ENCODE measurements at regions of chr10 and their contacts with region 1.

Region 1: DNA sequence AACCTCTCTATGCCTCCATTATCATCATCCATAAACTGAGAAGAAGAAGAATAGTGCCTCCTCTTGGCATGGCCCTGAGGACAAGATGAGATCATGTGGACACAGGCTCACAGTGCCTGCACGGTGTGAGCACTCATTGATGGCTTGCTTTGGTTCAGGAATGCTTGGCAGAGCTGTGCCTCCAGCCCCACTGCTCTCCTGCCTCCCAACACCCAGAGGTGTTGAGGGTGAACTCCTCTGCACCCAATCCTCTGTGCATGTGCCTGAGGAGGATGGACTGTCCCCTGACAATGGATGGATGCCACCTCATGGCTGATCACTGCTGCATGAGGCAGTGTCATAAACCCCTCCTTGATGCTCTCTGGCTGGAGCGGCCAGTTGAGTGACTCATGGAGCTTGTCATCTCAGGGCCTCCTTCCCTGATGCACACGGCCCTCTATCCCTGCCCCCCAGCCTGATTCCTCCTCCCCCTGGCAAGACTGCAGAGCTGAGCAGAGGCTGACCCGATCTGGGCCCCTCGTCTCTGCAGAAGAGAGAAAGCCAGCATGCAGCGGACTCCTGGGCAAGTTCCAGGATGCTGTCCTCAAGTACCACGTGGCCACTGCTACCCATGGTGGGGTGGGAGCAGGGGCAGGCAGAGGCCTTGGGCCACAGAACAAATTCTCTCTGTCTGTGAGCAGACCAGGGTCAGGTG is 136.3 kb downstream of the KCNMA1 start:
- DNase-seq: peak; percentile 41
- ATAC-seq: peak; percentile 56
- H3K4me3 ChIP-seq: no peak overlapping the region
- H3K27ac ChIP-seq: no peak overlapping the region
- H3K4me1 ChIP-seq: peaks cover 20 to 56% of the 10 kb centered on the region in 2 experiments
- H3K27me3 ChIP-seq: no peaks in the 10 kb centered on the region
- CTCF ChIP-seq: no peak
- POLR2A ChIP-seq: no peak
- RAD21 ChIP-seq: no peak

Region 2: DNA sequence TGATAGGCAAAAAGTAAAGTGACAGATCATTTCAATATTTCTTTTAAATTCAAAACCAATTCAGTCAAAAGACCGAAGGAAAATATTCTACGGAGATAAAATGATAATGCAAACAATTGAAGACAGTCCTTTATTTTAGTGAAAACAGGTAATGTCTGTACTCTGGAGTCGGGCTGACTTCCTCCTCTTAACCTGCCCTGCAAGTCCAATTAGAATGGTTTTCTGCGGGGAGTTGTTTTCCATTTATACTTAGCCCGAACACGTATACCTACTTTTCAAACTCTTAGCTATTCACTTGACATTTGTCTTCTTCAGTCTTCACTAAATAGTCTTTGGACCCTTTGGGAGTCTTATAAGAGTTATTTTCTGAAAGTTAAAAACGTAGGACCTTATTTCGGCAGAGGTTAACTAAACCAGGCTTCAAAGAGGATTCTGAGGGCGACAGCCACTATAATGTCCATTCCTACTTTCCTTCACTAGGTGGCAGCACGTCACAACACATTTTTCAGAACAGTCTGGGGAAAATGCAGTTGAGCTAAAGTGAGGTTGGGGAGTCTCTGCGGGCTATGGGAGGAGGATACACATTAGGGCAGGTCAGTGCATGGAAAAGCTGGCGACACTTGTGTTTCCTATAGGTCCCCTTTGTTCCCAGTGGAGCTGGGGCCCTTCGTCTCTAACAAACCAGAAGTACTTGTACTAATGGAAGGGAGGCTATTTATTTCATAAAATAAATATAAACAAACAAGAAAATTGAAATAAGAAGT is 335.7 kb before region 1 on chr10:
- CTCF ChIA-PET with region 1: no interaction called
- POLR2A ChIA-PET with region 1: no interaction called
- RAD21 ChIA-PET with region 1: no interaction called
- intact Hi-C with region 1: loop called (anchors 10 kb)
- DNase-seq: peak; percentile 51
- ATAC-seq: peak; percentile 90
- H3K4me3 ChIP-seq: no peak overlapping the region
- H3K27ac ChIP-seq: no peak overlapping the region
- H3K4me1 ChIP-seq: peaks cover 0 to 31% of the 10 kb centered on the region in 2 experiments; a peak in 2 of 4 replicates
- H3K27me3 ChIP-seq: peaks cover 34% of the 10 kb centered on the region
- CTCF ChIP-seq: peak; percentile 72 to 78 (median 73)
- POLR2A ChIP-seq: no peak
- RAD21 ChIP-seq: peak; percentile 86

Region 3: DNA sequence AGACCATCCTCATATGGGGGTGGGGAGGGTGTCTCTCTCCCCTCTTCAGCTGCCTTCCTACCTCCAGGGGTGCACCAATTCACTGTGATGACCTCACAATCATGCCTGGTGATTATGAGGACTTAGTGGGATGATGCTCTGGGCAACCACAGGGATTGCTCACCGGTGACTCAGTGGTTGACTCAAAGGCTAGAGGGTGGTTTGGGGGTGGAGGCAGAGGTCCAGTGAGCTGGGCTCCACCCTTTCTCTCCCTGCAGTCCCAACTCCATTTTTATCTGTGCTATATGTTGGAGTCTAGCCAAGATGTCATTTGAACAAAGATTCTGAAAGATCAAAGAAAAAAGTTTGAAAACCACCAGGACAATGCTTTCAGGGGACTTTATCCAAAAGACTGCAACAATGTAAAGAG is 150.6 kb before region 1 on chr10:
- CTCF ChIA-PET with region 1: no interaction called
- POLR2A ChIA-PET with region 1: interaction called, 3 read pairs
- RAD21 ChIA-PET with region 1: no interaction called
- intact Hi-C with region 1: loop called (anchors 5 kb)
- DNase-seq: peak; percentile 92
- ATAC-seq: peak; percentile 100
- H3K4me3 ChIP-seq: no peak overlapping the region
- H3K27ac ChIP-seq: no peak overlapping the region
- H3K4me1 ChIP-seq: peaks cover 13 to 19% of the 10 kb centered on the region in 2 experiments
- H3K27me3 ChIP-seq: peaks cover 31% of the 10 kb centered on the region; the same call in 1 of the 2 replicates
- CTCF ChIP-seq: 0 out of 6 replicates have a peak, but pooled peaks of 1 of the 3 experiments have one; percentile 9
- POLR2A ChIP-seq: no peak
- RAD21 ChIP-seq: no peak

Region 4: DNA sequence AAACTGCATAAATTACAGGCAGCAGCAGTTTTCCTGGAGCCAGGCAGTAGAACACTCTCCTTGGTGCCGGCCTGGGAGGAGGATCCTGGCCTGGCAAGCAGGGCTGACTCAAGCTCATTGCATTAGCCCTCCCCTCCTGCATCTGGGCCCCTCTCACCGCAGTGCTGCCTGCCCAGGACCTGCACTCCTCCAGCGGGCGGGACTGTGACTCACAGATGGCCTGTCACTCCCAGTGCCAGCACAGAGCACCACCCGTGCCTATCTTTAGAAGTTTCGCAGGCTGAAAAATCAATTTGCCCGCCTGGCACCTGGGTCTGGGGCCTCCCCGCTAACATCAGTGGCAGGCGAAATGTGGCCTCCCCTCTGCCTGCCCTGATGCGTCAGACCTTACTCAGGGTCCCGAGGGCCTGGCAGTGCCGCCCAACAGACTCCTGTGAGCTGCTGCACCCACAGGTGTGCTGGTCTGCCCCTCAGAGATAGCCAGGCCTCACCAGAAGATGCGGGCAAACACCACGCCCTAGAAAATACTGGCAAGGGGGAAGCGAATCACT is 12.6 kb after region 1 on chr10:
- CTCF ChIA-PET with region 1: interaction called, 8 read pairs
- POLR2A ChIA-PET with region 1: interaction called, 32 read pairs
- RAD21 ChIA-PET with region 1: no interaction called
- intact Hi-C with region 1: no loop called
- DNase-seq: peak; percentile 74
- ATAC-seq: peak; percentile 97
- H3K4me3 ChIP-seq: peak overlapping the region; percentile 14 to 48; a peak in 3 of 4 replicates
- H3K27ac ChIP-seq: peak overlapping the region; percentile 67
- H3K4me1 ChIP-seq: peaks cover 17 to 71% of the 10 kb centered on the region in 2 experiments
- H3K27me3 ChIP-seq: no peaks in the 10 kb centered on the region
- CTCF ChIP-seq: no peak
- POLR2A ChIP-seq: no peak
- RAD21 ChIP-seq: peak; percentile 46

Measured in HCT116 (cell line).